Endothelial cell of umbilical vein (primary cell): ENCODE measurements at regions of chr11 and their contacts with region 1.

Region 1: DNA sequence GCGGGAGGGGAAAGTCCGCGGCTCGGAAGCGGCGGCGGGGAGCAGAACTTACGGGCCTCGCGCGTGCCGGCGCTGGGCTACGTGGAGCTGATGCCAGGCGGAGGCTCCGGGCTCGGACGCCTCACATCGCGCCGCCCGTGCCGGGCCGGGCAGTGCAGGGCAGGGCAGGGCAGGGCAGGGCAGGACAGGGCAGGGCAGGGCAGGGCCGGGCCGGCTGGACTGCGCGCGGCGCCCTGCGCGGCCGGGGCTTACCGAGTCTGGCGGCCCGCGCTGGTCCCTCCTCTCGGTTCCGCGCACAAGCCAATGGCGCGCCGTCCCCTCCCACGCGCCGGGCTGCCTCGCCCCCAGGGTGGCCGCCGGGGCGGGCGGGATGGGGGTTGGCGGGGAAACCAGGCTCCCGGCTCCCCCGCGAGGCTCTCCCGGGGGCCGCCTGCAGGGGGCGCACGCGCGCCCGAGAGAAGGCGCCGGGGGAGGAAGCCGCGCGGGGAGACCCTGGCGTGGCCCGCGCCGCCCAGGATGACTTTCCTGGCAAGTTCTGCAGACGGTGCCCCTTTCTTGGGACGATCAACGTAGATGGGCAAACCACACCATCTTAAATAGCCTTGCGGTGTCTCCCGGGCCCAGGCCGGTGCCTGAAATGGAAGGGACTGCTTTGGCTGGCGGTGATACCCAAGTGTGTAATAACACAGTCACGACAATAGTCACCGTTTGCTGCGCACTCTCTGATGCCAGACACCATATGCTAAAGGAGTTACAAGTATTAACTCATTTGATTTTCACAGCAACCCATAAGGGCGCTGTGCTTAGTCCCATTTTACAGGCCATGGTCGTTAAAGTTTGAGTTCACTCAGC is at the start of gene TP53I11:
- DNase-seq: peak; percentile 77
- H3K4me3 ChIP-seq: peak within 1 kb of the TSS; percentile 69 to 82 (median 72)
- H3K27ac ChIP-seq: peak within 1 kb of the TSS; percentile 56
- H3K4me1 ChIP-seq: peaks cover 16% of the 10 kb centered on the region
- H3K27me3 ChIP-seq: no peaks in the 10 kb centered on the region
- CTCF ChIP-seq: peak; percentile 46 to 72
- POLR2A ChIP-seq: no peak
- total RNA-seq, gene TP53I11: 78.2 and 79.4 TPM in 2 replicates

Region 2: DNA sequence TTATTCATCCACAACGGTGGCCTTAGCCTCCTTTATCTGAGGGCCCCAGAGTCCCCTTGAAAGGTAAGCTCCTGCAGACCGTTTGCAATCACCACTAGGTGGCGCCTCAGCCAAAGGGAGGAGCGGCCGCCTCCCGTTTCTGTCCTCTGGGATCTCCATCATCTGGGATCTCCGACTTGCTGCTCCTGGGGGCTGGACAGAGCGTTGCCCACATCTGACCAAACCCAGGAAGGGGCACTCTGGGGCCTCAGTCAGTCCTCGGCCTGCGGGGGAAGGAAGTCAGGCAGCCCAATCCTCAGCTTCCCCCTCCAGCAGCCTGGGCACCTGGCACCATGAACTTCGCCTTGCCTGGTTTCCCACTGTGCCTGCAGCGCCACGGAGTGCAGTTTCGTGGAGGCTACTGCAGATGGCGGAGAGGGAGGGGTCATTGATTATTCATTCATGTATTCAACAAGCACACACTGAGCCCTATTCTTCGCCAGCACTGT is 23.6 kb before region 1 on chr11:
- CTCF ChIA-PET with region 1: interaction called, 19 read pairs
- POLR2A ChIA-PET with region 1: no interaction called
- dilution Hi-C with region 1: no loop called
- intact Hi-C with region 1: no loop called
- DNase-seq: peak; percentile 52
- H3K4me3 ChIP-seq: no peak overlapping the region
- H3K27ac ChIP-seq: no peak overlapping the region
- H3K4me1 ChIP-seq: no peaks in the 10 kb centered on the region
- H3K27me3 ChIP-seq: no peaks in the 10 kb centered on the region
- CTCF ChIP-seq: peak; percentile 79 to 85
- POLR2A ChIP-seq: no peak

Region 3: GRCh38 chr11:44977476-44977984 is 26.7 kb after region 1 on chr11:
- CTCF ChIA-PET with region 1: interaction called, 11 read pairs
- POLR2A ChIA-PET with region 1: interaction called, 4 read pairs
- dilution Hi-C with region 1: no loop called
- intact Hi-C with region 1: loop called (anchors 1 kb)
- DNase-seq: peak; percentile 54
- H3K4me3 ChIP-seq: no peak overlapping the region
- H3K27ac ChIP-seq: peak overlapping the region; percentile 14
- H3K4me1 ChIP-seq: peaks cover 42% of the 10 kb centered on the region
- H3K27me3 ChIP-seq: no peaks in the 10 kb centered on the region
- CTCF ChIP-seq: peak; percentile 12 to 15
- POLR2A ChIP-seq: no peak

Region 4: DNA sequence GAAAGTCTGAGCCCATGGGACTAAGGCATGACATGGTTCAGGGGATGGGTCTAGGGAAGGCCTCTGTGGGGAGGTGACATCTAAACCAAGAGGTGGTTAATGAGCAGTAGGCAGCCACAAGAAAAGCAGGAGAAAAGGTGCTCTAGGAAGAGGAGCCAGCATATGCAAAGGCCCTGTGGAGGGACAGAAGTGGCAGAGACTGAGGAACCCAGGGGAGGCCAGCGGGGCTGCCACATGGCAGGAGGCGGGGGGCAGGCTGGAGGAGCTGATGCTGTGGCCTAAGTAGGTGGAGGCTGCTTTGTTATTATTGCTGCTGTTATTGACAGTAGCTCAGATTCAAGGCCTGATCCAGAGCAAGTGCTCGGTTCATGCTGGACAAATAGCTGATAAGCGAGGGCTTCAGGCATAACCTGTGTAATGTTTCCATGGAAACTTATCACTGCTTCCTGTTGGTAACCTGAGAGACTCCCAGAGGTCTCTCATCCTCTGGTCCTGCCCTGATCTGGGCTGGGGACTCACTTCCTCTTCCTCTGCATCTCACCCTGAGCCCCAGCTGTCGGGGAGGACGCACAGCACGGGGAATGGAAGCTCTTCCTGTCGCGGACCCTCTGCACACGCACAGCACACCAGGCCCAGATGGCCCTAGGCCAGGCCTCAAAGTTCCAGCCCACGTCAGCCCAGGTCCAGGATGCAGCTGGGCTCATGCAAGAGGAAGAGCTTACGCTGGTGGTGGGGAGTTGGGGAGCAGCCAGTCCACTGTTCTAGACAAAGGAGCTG is 75.1 kb after region 1 on chr11:
- CTCF ChIA-PET with region 1: interaction called, 11 read pairs
- POLR2A ChIA-PET with region 1: interaction called, 9 read pairs
- dilution Hi-C with region 1: no loop called
- intact Hi-C with region 1: loop called (anchors 1 kb)
- DNase-seq: peak; percentile 98
- H3K4me3 ChIP-seq: no peak overlapping the region
- H3K27ac ChIP-seq: peak overlapping the region; percentile 67
- H3K4me1 ChIP-seq: peaks cover 14% of the 10 kb centered on the region
- H3K27me3 ChIP-seq: peaks cover 3 to 11% of the 10 kb centered on the region in 2 experiments
- CTCF ChIP-seq: no peak
- POLR2A ChIP-seq: no peak

Region 5: DNA sequence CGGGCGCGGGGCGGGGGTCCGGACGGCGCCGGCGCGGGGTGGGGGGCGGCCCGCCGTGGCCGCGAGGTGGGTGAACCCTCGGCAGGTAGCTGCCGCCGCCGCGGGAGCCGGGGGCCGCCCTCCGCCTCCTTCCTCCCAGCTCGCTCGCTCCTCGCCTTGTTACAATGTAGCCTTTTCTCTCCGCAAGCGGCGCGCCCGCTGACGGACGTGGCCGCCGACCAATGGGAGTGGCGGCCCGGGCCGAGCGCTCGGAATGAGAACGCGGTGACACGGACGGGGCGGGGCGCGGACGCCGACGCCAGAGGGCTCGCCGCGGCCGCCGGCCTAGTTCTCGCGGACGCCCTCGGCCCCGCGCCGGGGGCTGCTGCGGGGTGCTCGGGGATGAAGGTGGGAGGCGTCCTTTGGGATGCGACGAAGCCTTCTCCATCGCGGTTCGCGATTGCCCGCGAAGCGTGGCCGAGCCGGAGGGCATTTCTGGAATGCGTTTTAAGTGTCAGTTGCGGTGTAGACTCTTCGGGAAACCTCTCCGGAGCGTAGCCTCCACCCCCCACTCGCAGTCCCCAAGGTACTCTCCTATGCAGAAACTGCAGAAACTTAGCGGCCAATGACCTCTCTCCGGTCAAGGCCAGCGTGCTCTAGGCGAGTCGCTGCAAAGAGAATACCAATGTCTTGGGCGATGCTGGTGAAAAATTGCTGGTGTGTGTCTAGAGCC is 196.3 kb after region 1 on chr11:
- CTCF ChIA-PET with region 1: no interaction called
- POLR2A ChIA-PET with region 1: no interaction called
- dilution Hi-C with region 1: no loop called
- intact Hi-C with region 1: loop called (anchors 2 kb)
- DNase-seq: peak; percentile 94
- H3K4me3 ChIP-seq: peak overlapping the region; percentile 41 to 86 (median 59)
- H3K27ac ChIP-seq: peak overlapping the region; percentile 47
- H3K4me1 ChIP-seq: peaks cover 17% of the 10 kb centered on the region
- H3K27me3 ChIP-seq: peaks cover 10 to 31% of the 10 kb centered on the region in 2 experiments
- CTCF ChIP-seq: no peak
- POLR2A ChIP-seq: no peak

Region 6: GRCh38 chr11:45665206-45665932 is 714.5 kb after region 1 on chr11 and contains the start of gene CHST1:
- CTCF ChIA-PET with region 1: no interaction called
- POLR2A ChIA-PET with region 1: no interaction called
- dilution Hi-C with region 1: no loop called
- intact Hi-C with region 1: loop called (anchors 10 kb)
- DNase-seq: peak; percentile 51
- H3K4me3 ChIP-seq: peak within 1 kb of the TSS; percentile 47 to 59 (median 55)
- H3K27ac ChIP-seq: no peak within 1 kb of the TSS
- H3K4me1 ChIP-seq: peaks cover 29% of the 10 kb centered on the region
- H3K27me3 ChIP-seq: peaks cover 0 to 8% of the 10 kb centered on the region in 2 experiments
- CTCF ChIP-seq: no peak
- POLR2A ChIP-seq: no peak
- total RNA-seq, gene CHST1: 40.5 and 71.2 TPM in 2 replicates